Activated naive CD4-positive, alpha-beta T cell treated with anti-CD3 and anti-CD28 coated beads for 36 hours (primary cell): ENCODE measurements at regions of chr17 and their contacts with region 1.

Region 1: DNA sequence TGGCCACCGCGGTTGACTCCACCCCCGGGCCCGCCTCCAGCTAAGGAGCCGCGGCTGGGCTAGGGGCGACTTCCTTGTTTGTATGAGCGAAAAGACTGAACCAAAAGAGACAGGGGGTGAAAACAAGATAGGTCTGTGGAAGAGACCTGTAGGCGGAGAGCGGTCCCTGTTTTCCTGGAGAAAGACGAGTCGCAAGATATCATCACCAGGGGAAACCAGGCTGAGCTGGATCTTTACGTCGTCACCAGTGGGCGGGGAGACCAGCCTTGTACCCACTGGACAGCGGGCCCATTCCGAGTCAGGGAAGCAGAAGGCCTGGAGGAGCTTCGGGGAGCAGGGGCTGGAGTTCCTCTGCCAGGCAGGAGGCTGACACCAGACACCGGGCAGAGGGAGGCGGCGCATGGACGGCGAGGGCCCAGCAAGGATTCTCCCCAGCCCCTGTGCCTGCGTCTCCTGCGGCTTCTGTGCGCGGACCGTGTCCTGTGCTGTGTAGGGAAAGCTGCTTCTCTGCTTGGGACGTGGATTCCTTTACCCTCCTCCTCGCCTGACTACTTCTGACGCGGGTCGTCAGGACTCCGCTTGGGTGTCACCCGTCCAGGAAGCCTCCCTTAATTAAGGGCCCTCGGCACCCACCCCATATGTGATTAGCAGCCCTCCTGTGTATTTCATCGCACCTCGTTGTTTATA is 10.3 kb upstream of the ARL4D start:
- DNase-seq: peak; percentile 92
- H3K4me3 Mint-ChIP-seq: peak overlapping the region; percentile 82
- H3K27ac Mint-ChIP-seq: peak overlapping the region; percentile 93
- H3K4me1 Mint-ChIP-seq: peaks cover 13% of the 10 kb centered on the region
- H3K27me3 Mint-ChIP-seq: no peaks in the 10 kb centered on the region

Region 2: GRCh38 chr17:43338886-43339516 is 49.5 kb before region 1 on chr17:
- CTCF ChIA-PET with region 1: interaction called, 4 read pairs
- intact Hi-C with region 1: loop called (anchors 1 kb)
- DNase-seq: peak; percentile 82
- H3K4me3 Mint-ChIP-seq: no peak overlapping the region
- H3K27ac Mint-ChIP-seq: no peak overlapping the region
- H3K4me1 Mint-ChIP-seq: peaks cover 31% of the 10 kb centered on the region
- H3K27me3 Mint-ChIP-seq: no peaks in the 10 kb centered on the region

Region 3: GRCh38 chr17:43349142-43349541 is 39.4 kb before region 1 on chr17:
- CTCF ChIA-PET with region 1: no interaction called
- intact Hi-C with region 1: no loop called
- DNase-seq: no peak
- H3K4me3 Mint-ChIP-seq: no peak overlapping the region
- H3K27ac Mint-ChIP-seq: no peak overlapping the region
- H3K4me1 Mint-ChIP-seq: peaks cover 2% of the 10 kb centered on the region
- H3K27me3 Mint-ChIP-seq: no peaks in the 10 kb centered on the region

Region 4: DNA sequence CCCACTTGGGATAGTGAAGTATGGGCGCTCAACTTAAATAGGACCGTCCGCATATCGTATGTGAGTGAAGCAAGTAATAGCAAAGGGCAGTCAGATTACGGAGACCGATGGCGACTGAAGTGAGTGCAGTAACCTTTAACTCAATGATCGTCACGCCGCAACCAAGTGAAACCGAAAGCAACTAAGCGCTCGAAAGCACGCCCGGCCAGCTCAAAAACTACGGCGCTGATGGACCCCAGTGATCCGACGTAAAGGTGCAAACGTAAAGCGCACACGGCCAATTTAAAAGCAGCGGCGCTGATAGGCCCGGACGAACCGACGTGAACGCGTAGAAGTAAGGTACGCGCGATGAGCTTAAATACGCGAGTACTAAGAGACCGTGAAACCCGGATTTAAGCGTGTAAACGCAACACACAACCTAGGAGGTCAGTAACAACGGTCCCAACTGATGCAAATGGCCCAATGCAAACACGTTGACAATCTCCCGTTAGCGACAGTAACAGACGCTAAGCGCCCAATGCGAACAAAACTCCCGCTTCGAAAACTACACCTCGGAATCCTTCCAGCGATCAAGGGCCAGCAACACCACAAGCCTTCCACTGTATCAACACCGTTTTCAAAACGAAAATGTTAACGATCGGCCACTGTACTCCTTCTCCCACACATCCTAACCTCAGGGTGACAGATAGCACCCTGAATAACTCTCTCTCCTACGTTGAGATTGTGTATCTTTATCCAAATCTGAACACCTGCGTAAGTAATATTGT is 27.6 kb before region 1 on chr17:
- CTCF ChIA-PET with region 1: interaction called, 4 read pairs
- intact Hi-C with region 1: loop called (anchors 1 kb)
- DNase-seq: peak; percentile 91
- H3K4me3 Mint-ChIP-seq: peak overlapping the region; percentile 85
- H3K27ac Mint-ChIP-seq: peak overlapping the region; percentile 100
- H3K4me1 Mint-ChIP-seq: peaks cover 33% of the 10 kb centered on the region
- H3K27me3 Mint-ChIP-seq: peaks cover 8% of the 10 kb centered on the region

Region 5: DNA sequence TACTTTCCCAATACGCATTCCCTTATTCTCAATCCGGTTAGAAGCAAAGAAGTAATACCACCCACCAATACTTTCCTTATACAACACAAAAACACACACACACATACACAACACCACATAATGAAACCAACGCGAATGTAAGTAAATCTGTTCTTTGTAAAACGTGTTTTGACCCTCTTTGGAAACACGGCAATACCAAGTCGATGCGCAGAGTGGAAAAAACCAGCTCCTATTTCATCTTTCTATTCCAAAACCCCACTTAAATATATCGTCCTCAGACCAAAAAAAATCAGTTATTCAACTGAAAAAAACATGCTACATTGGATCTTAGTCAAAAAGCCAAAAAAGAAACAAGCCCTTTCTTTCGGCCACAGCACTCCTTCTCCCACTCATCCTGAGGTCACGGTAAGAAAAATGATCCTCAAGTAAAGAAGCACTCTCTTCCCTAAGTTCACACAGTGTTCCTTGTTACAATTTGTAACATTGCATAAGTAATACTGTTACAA is 20.7 kb before region 1 on chr17:
- CTCF ChIA-PET with region 1: interaction called, 15 read pairs
- intact Hi-C with region 1: loop called (anchors 1 kb)
- DNase-seq: peak; percentile 45
- H3K4me3 Mint-ChIP-seq: peak overlapping the region; percentile 81
- H3K27ac Mint-ChIP-seq: peak overlapping the region; percentile 99
- H3K4me1 Mint-ChIP-seq: peaks cover 49% of the 10 kb centered on the region
- H3K27me3 Mint-ChIP-seq: no peaks in the 10 kb centered on the region

Region 6: DNA sequence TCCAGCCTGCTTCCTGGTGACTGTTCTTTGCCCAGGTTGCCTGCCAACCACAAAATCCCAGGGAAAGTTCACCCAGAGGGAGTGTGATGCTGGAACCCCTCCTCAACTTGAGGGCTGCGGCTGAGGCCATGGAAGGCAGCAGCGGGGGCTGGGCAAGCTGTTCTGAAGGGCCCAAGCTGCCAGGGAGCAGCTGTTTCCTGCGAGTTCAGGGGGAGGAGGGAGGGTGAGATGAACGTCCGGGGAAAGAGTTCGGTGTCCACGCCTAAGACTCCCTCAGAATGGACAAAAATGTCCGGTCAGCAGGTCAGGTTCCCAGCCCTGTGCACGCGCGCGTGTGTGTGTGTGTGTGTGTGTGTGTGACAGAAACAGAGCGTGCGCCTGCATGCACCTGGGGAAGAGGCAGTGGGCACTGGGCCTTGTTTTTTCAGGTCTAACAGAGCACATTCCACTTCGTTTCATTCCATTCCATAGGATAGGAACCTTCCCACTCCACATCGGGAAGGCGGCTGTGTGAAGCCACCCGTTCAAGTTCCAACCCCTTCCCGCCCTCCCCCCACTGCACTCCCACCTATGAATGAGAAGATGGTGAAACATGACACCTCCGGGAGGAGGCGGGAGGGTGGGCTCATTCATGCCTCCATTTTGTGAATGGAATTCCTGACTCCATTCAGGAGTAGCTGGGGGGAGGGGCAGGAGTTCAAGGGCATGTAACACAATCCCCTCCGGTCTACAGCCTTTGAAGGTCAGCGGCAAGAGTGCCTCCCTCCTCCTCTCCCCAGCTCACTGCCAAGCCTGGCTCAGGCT is 142.0 kb after region 1 on chr17:
- CTCF ChIA-PET with region 1: no interaction called
- intact Hi-C with region 1: no loop called
- DNase-seq: no peak
- H3K4me3 Mint-ChIP-seq: no peak overlapping the region
- H3K27ac Mint-ChIP-seq: no peak overlapping the region
- H3K4me1 Mint-ChIP-seq: no peaks in the 10 kb centered on the region
- H3K27me3 Mint-ChIP-seq: no peaks in the 10 kb centered on the region